OCI-LY7 (cell line): ENCODE measurements at regions of chr10 and their contacts with region 1.

Region 1: GRCh38 chr10:62045765-62046521 is 144.4 kb downstream of the ARID5B start:
- DNase-seq: peak; percentile 22
- H3K4me3 ChIP-seq: peak overlapping the region; percentile 27
- H3K27ac ChIP-seq: peak overlapping the region; percentile 76
- H3K4me1 ChIP-seq: peaks cover 98% of the 10 kb centered on the region
- CTCF ChIP-seq: no peak

Region 2: DNA sequence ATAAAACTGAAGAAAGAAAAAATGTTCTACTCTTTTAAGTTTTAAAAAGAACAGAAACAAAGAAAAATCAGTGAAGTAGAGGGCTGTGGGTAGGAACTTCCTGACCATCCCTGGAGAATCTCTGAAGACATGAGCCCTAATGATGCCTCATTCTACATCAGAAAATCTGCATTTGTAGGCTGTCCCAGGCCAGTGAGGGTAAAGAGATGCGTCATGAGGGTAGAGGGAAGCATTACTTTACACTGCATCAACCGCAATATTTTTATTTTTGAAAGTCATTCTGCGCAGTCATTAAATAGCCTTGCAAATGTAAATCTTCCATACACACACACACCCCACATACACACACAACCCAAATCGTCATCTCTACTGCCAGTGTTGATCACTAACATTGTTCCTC is 465.3 kb before region 1 on chr10:
- CTCF ChIA-PET with region 1: no interaction called
- POLR2A ChIA-PET with region 1: no interaction called
- intact Hi-C with region 1: no loop called
- DNase-seq: no peak
- H3K4me3 ChIP-seq: no peak overlapping the region
- H3K27ac ChIP-seq: no peak overlapping the region
- H3K4me1 ChIP-seq: no peaks in the 10 kb centered on the region
- CTCF ChIP-seq: no peak

Region 3: DNA sequence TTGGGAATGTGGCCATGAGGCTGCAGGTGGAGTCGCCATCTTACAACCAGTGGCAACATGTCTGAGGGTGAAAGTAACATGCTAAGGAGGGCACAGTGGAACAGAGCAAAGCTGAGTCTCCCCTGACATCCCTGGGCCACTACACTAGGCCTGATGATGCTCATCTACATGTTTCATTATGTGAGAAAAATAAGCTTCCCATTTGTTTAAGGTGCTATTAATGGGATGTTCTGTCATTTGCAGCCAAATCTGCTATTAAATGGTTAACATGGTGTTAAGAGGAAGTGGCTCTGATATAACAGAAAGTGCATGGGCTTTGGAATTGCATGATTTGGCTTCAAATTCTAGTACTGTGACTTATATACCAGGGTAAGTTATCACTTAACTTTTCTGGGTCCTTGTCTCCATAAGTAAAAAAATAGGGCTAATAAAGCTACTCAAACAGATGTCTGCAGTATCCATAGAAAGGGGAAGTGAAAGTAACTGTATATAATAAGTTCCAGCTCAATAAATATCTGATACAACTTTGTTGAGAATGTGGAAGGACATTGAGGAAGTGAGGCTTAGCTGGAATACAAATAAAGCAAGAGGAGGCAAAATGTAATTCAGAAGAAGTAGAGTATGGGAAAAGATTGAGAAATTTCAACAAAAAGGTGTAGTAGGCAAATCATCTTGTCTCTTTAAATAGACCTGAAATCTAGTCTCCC is 63.8 kb after region 1 on chr10:
- CTCF ChIA-PET with region 1: no interaction called
- POLR2A ChIA-PET with region 1: interaction called, 11 read pairs
- intact Hi-C with region 1: loop called (anchors 2 kb)
- DNase-seq: peak; percentile 89
- H3K4me3 ChIP-seq: peak overlapping the region; percentile 46
- H3K27ac ChIP-seq: peak overlapping the region; percentile 90
- H3K4me1 ChIP-seq: peaks cover 59% of the 10 kb centered on the region
- CTCF ChIP-seq: no peak

Region 4: GRCh38 chr10:62194924-62195674 is 149.2 kb after region 1 on chr10:
- CTCF ChIA-PET with region 1: no interaction called
- POLR2A ChIA-PET with region 1: no interaction called
- intact Hi-C with region 1: no loop called
- DNase-seq: no peak
- H3K4me3 ChIP-seq: no peak overlapping the region
- H3K27ac ChIP-seq: no peak overlapping the region
- H3K4me1 ChIP-seq: no peaks in the 10 kb centered on the region
- CTCF ChIP-seq: no peak

Region 5: GRCh38 chr10:62224606-62225005 is 178.7 kb after region 1 on chr10:
- CTCF ChIA-PET with region 1: no interaction called
- POLR2A ChIA-PET with region 1: no interaction called
- intact Hi-C with region 1: no loop called
- DNase-seq: no peak
- H3K4me3 ChIP-seq: no peak overlapping the region
- H3K27ac ChIP-seq: no peak overlapping the region
- H3K4me1 ChIP-seq: no peaks in the 10 kb centered on the region
- CTCF ChIP-seq: no peak

Region 6: DNA sequence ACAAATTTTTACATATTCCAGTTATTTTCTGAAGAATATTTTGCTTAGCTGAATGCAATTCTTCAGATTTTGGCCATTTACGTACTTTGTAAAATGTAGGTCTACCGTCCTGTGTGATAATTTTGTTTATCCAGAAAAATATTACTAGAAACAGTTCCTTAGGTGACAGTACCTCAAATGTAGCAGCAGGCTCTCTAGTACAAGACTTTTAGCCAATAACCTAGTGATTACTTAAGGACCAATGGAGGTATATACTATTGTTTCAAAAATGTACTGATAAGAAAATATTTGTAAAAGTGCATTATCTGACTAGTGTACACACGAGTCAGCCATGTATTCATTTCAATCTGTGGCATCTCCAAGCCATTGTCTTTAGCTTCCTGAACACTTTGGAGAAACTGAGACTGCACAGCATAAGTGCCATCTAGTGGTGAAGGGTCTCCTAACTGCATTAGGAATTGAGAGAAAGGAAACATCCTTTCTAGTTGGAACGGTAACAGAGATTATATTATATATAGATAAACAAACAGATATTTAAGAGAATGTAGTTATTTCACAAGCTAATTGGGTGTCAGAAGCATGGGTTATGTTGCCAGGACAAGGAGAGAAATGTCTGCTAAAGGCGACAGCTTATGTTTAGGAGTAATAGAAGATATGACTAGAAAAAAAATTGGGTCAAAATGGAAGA is 199.0 kb after region 1 on chr10:
- CTCF ChIA-PET with region 1: no interaction called
- POLR2A ChIA-PET with region 1: interaction called, 29 read pairs
- intact Hi-C with region 1: no loop called
- DNase-seq: peak; percentile 86
- H3K4me3 ChIP-seq: no peak overlapping the region
- H3K27ac ChIP-seq: peak overlapping the region; percentile 67
- H3K4me1 ChIP-seq: peaks cover 26% of the 10 kb centered on the region
- CTCF ChIP-seq: peak; percentile 99